K562 (cell line): ENCODE measurements at regions of chr5 and their contacts with region 1.

Region 1: DNA sequence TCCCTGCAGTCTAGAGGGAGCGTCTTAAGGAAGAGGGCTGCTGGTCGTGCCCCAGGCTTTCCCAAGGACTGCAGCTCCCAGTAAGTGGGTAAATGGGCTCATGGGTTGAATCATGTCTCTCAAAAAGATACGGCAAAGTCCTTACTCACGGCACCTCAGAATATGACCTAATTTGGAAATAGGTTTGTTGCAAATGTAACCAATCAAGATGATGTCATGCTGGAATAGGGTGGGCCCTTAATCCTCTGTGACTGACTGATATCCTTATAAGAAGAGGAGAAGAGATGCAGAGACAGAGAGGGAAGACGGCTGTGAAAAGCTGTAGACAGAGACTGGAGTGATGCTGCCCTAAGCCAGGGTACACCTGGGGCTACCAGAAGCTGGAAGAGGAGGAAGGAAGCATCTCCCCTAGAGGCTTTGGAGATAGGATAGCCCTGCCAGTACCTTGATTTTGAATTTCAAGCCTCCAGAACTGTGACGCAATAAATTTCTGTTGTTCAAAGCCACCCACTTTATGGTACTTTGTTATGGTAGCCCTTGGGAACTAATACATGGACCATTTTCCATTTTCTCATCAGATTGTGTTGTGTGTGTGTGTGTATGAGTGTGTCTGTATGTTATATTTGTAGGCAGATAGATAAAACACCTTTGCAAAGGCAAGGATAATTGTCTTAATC is 15.0 kb downstream of the GALNT10 start:
- DNase-seq: no peak
- ATAC-seq: peak; percentile 22
- H3K4me3 ChIP-seq: no peak overlapping the region
- H3K27ac ChIP-seq: peak overlapping the region; percentile 77
- H3K4me1 ChIP-seq: peaks cover 12 to 52% of the 10 kb centered on the region in 2 experiments; a peak in 4 of 5 replicates
- H3K27me3 ChIP-seq: no peaks in the 10 kb centered on the region
- CTCF ChIP-seq: no peak
- EP300 ChIP-seq: no peak
- POLR2A ChIP-seq: no peak
- RAD21 ChIP-seq: no peak

Region 2: GRCh38 chr5:154189819-154190594 is 15.6 kb before region 1 on chr5:
- CTCF ChIA-PET with region 1: no interaction called
- POLR2A ChIA-PET with region 1: interaction called, 17 read pairs
- in situ Hi-C with region 1: no loop called
- intact Hi-C with region 1: no loop called
- DNase-seq: peak; percentile 75 to 90 (median 84)
- ATAC-seq: peak; percentile 93
- H3K4me3 ChIP-seq: peak overlapping the region; percentile 73
- H3K27ac ChIP-seq: peak overlapping the region; percentile 71
- H3K4me1 ChIP-seq: peaks cover 18 to 21% of the 10 kb centered on the region in 2 experiments; a peak in 4 of 5 replicates
- H3K27me3 ChIP-seq: no peaks in the 10 kb centered on the region
- CTCF ChIP-seq: peak; percentile 64 to 78 (median 72)
- EP300 ChIP-seq: no peak
- POLR2A ChIP-seq: peak; percentile 70
- RAD21 ChIP-seq: peak; percentile 24 to 31